ENCODE measurements at regions of chr4 and their contacts with region 1.

Region 1: GRCh38 chr4:184538023-184538599 is 63.8 kb upstream of the IRF2 start:
- DNase-seq: peak; percentile 85
- ATAC-seq: peak; percentile 61
- H3K4me3 Mint-ChIP-seq: peak overlapping the region; percentile 90
- H3K27ac Mint-ChIP-seq: peak overlapping the region; percentile 95
- H3K4me1 Mint-ChIP-seq: peaks cover 50% of the 10 kb centered on the region
- H3K27me3 Mint-ChIP-seq: no peaks in the 10 kb centered on the region

Region 2: DNA sequence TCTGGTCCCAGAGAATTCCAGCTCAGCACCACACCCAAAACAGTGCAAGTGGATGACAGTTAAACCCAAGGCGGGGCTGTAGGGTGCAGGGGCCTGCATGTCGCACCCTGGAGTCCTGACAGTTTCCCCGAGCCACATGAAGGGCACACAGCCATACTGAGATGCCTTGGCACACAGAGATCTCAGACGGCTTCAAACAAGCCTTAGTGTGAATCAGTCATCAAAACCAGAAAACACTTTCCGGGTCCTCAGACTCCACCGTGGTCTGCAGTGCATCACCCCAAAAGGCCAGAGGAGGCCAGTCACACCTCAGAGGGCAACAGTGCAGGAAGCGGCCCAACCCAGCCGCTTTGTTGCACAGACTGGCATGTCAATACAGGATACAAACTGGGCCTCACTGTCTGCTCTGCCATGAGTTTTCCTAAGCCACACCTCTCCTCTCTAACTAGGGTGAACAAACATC is 255.8 kb before region 1 on chr4:
- CTCF ChIA-PET with region 1: interaction called, 30 read pairs
- DNase-seq: peak; percentile 88
- ATAC-seq: peak; percentile 86
- H3K4me3 Mint-ChIP-seq: peak overlapping the region; percentile 13
- H3K27ac Mint-ChIP-seq: peak overlapping the region; percentile 95
- H3K4me1 Mint-ChIP-seq: peaks cover 61% of the 10 kb centered on the region
- H3K27me3 Mint-ChIP-seq: no peaks in the 10 kb centered on the region

Region 3: GRCh38 chr4:184400375-184400870 is 137.7 kb before region 1 on chr4:
- CTCF ChIA-PET with region 1: no interaction called
- DNase-seq: no peak
- ATAC-seq: no peak
- H3K4me3 Mint-ChIP-seq: no peak overlapping the region
- H3K27ac Mint-ChIP-seq: no peak overlapping the region
- H3K4me1 Mint-ChIP-seq: peaks cover 37% of the 10 kb centered on the region
- H3K27me3 Mint-ChIP-seq: no peaks in the 10 kb centered on the region

Region 4: GRCh38 chr4:184474263-184475095 is 63.6 kb before region 1 on chr4 and contains the start of gene IRF2:
- CTCF ChIA-PET with region 1: interaction called, 21 read pairs
- DNase-seq: peak; percentile 99
- ATAC-seq: peak; percentile 80
- H3K4me3 Mint-ChIP-seq: peak within 1 kb of the TSS; percentile 98
- H3K27ac Mint-ChIP-seq: peak within 1 kb of the TSS; percentile 99
- H3K4me1 Mint-ChIP-seq: peaks cover 58% of the 10 kb centered on the region
- H3K27me3 Mint-ChIP-seq: no peaks in the 10 kb centered on the region
- total RNA-seq, gene IRF2: 81.6 to 112 TPM

Region 5: DNA sequence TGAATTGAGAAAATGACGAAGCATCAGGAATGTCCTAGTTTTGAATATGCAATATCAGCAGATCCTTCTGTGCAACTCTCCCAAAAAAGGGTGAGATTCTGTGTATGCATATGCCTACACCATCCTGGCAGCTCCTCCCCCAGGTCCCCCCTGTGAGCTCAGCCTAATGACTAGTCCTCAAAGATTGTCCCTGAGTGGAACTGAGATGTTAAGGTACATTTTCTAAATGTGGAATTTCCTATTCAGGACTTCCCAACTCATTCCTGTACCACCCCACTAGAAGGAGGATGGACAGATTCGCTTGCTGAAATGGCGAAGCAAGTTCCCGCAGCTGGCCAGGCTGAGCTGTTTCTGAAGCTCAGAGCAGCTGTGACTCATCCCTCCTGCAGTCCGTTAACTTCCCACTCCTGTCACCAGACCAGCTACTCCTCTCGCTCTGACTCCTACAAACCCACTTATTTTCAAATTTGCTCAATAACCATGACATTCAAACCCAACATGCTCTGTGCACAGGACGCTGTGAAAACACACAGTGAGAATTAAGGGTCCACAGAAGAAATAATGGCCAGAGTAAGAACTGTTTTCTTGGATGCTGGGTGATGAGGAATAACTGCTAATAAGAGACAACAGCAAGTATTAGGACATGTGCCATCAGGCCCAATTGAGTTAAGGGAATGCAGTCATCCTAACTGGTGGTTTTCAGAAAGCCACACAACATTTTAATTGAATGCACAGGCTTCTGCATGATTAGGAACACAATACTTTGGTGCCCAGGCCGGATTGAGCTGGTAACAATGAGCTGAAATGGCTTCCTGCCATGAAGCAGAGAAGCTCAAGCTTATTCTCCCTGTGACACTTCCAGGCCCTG is 23.8 kb before region 1 on chr4:
- CTCF ChIA-PET with region 1: interaction called, 20 read pairs
- DNase-seq: peak; percentile 92
- ATAC-seq: peak; percentile 95
- H3K4me3 Mint-ChIP-seq: peak overlapping the region; percentile 57
- H3K27ac Mint-ChIP-seq: peak overlapping the region; percentile 95
- H3K4me1 Mint-ChIP-seq: peaks cover 46% of the 10 kb centered on the region
- H3K27me3 Mint-ChIP-seq: no peaks in the 10 kb centered on the region

Measured in activated CD8-positive, alpha-beta memory T cell treated with anti-CD3 and anti-CD28 coated beads, Interleukin-2, amount 10 ng/mL, durations not matched to agents 7 days and 5 days (primary cell).